Activated T-helper 2 cell treated with anti-CD3 and anti-CD28 coated beads, Interferon-gamma antibody, Interleukin-2, Interleukin-4, amounts not matched to agents 10 μg/mL and 5 μg/mL and 100 μg/mL, durations not matched to agents 14 hours and 24 hours and 36 hours (primary cell): ENCODE measurements at regions of chr9 and their contacts with region 1.

Region 1: DNA sequence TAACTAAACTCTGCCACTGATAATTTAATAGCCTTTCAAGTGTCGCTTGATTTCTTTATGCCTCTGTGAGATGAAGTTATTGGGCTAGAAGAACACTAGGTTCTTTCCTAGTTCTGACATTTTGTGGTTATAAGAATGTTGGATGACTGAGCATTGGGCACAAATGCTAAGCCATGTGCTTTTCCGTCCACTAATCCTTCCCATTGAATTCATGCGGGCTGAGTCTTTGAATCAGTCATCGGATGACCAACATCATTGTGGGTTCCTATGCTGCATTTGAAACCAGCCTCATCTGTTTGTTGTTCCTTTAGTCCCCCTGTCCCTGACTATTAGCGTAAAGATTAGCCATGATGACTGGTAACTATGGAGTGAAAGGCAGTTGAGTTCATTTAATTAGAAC is 58.5 kb downstream of the ALDH1A1 start:
- DNase-seq: no peak
- H3K4me3 Mint-ChIP-seq: no peak overlapping the region
- H3K27ac Mint-ChIP-seq: no peak overlapping the region
- H3K4me1 Mint-ChIP-seq: no peaks in the 10 kb centered on the region
- H3K27me3 Mint-ChIP-seq: no peaks in the 10 kb centered on the region

Region 2: DNA sequence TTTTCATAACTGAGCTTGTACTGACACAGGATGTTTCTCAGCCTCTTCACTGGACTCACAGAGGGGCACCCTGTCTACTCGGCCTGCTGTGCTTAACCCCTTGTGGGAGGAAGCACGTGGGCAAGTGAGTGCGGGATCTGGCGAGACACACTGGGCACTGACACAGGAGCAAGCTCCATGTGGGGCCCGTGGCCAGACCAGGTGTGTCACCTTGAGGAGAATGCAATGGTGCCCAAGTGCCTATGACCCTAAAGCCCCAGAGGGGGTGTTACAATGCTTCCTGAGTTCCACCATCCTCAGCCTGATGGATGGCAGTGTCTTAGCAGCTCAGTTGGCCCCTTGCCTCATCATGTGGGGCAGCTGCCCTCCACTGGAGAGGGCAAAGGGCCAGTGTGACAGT is 70.4 kb before region 1 on chr9:
- intact Hi-C with region 1: no loop called
- DNase-seq: no peak
- H3K4me3 Mint-ChIP-seq: no peak overlapping the region
- H3K27ac Mint-ChIP-seq: no peak overlapping the region
- H3K4me1 Mint-ChIP-seq: no peaks in the 10 kb centered on the region
- H3K27me3 Mint-ChIP-seq: peaks cover 3% of the 10 kb centered on the region

Region 3: DNA sequence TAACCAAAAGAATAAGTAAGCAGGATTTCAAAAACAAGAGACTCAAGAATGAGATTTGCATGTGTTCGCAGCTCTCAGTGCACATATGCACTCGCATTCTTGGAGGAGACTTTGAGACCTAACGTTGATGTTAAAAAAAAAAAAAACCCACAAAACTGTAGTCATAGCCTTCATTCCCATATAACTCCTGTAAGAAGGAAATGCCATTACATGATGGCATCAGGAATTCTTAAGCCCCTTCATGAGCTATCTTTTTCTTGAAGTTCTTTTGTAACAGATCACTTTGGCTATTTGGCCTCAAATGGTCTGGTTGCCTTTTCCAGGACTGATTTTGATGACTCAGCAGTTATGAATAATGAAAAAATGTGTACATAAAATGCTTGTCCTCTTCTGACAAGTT is 55.3 kb before region 1 on chr9:
- intact Hi-C with region 1: loop called (anchors 10 kb)
- DNase-seq: no peak
- H3K4me3 Mint-ChIP-seq: no peak overlapping the region
- H3K27ac Mint-ChIP-seq: no peak overlapping the region
- H3K4me1 Mint-ChIP-seq: no peaks in the 10 kb centered on the region
- H3K27me3 Mint-ChIP-seq: peaks cover 3% of the 10 kb centered on the region